ENCODE measurements at regions of chr19 and their contacts with region 1.

Region 1: GRCh38 chr19:38707512-38708114 is 36.7 kb downstream of the CAPN12 start:
- DNase-seq: peak; percentile 86 to 94
- H3K4me3 ChIP-seq: no peak overlapping the region
- H3K27ac ChIP-seq: peak overlapping the region; percentile 63 to 88 (median 74)
- H3K4me1 ChIP-seq: peaks cover 59 to 96% (median 79%) of the 10 kb centered on the region in 4 donors
- H3K27me3 ChIP-seq: no peaks in the 10 kb centered on the region
- CTCF ChIP-seq: peak in 1 of 7 experiments; percentile 11
- EP300 ChIP-seq: no peak
- POLR2A ChIP-seq: no peak

Region 2: GRCh38 chr19:38658462-38659306 is 48.9 kb before region 1 on chr19:
- intact Hi-C with region 1: loop called (anchors 10 kb)
- DNase-seq: peak; percentile 63 to 96
- H3K4me3 ChIP-seq: peak overlapping the region in 1 of 4 donors; percentile 2
- H3K27ac ChIP-seq: peak overlapping the region; percentile 77 to 99 (median 96)
- H3K4me1 ChIP-seq: peaks cover 95 to 100% (median 99%) of the 10 kb centered on the region in 4 donors
- H3K27me3 ChIP-seq: no peaks in the 10 kb centered on the region
- CTCF ChIP-seq: no peak
- EP300 ChIP-seq: no peak
- POLR2A ChIP-seq: no peak

Region 3: GRCh38 chr19:38929929-38930775 is 222.5 kb after region 1 on chr19 and contains the start of gene SARS2:
- intact Hi-C with region 1: no loop called
- DNase-seq: peak; percentile 91 to 97
- H3K4me3 ChIP-seq: peak within 1 kb of the TSS; percentile 69 to 88 (median 78)
- H3K27ac ChIP-seq: peak within 1 kb of the TSS; percentile 88 to 92 (median 91)
- H3K4me1 ChIP-seq: peaks cover 20 to 42% (median 32%) of the 10 kb centered on the region in 4 donors
- H3K27me3 ChIP-seq: no peaks in the 10 kb centered on the region
- CTCF ChIP-seq: peak in 6 of 7 experiments; percentile 81 to 100 (median 95)
- EP300 ChIP-seq: no peak
- POLR2A ChIP-seq: no peak
- total RNA-seq, gene SARS2: 4.9 to 59.4 (median 18.2) TPM in 4 of 5 donors, not detected in the other

Measured in stomach (tissue), 19 donors.